Activated CD4-positive, alpha-beta T cell treated with anti-CD3 and anti-CD28 coated beads for 36 hours (primary cell): ENCODE measurements at regions of chr10 and their contacts with region 1.

Region 1: DNA sequence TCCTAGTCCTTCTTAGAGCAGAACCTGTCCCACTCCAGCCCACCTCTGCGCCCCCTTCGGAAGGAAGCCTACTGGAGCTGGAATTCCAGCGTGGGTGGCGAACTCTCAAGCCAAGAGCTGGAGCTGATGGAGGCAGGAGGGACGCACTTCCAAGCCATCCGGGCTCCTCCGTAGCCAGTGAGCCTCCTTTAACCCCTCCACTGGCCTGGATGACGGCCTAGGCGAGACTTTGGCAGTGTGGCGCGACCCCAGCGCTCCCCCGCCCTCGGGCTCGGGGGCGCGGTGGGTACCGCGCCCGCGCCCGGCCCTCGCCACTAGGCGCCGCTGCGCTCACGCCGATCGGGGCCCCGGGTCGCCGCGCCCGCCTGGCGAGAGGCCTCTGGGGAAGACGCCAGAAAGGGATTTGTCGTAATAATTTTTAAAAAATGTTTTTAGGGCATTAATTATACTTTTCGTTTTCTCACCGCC is 5.1 kb upstream of the EMX2 start:
- DNase-seq: peak; percentile 61
- ATAC-seq: peak; percentile 38
- H3K4me3 Mint-ChIP-seq: no peak overlapping the region
- H3K27ac Mint-ChIP-seq: no peak overlapping the region
- H3K4me1 Mint-ChIP-seq: peaks cover 14% of the 10 kb centered on the region
- H3K27me3 Mint-ChIP-seq: peaks cover 67% of the 10 kb centered on the region

Region 2: GRCh38 chr10:117167789-117168674 is 369.4 kb before region 1 on chr10:
- CTCF ChIA-PET with region 1: no interaction called
- POLR2A ChIA-PET with region 1: no interaction called
- intact Hi-C with region 1: loop called (anchors 2 to 10 kb)
- DNase-seq: peak; percentile 85
- ATAC-seq: peak; percentile 88
- H3K4me3 Mint-ChIP-seq: peak overlapping the region; percentile 26
- H3K27ac Mint-ChIP-seq: no peak overlapping the region
- H3K4me1 Mint-ChIP-seq: peaks cover 40% of the 10 kb centered on the region
- H3K27me3 Mint-ChIP-seq: peaks cover 72% of the 10 kb centered on the region

Region 3: GRCh38 chr10:117178190-117178589 is 359.3 kb before region 1 on chr10:
- CTCF ChIA-PET with region 1: no interaction called
- POLR2A ChIA-PET with region 1: no interaction called
- intact Hi-C with region 1: no loop called
- DNase-seq: no peak
- ATAC-seq: no peak
- H3K4me3 Mint-ChIP-seq: no peak overlapping the region
- H3K27ac Mint-ChIP-seq: no peak overlapping the region
- H3K4me1 Mint-ChIP-seq: peaks cover 18% of the 10 kb centered on the region
- H3K27me3 Mint-ChIP-seq: peaks cover 16% of the 10 kb centered on the region

Region 4: GRCh38 chr10:117503244-117504205 is 33.9 kb before region 1 on chr10:
- CTCF ChIA-PET with region 1: no interaction called
- POLR2A ChIA-PET with region 1: no interaction called
- intact Hi-C with region 1: no loop called
- DNase-seq: no peak
- ATAC-seq: no peak
- H3K4me3 Mint-ChIP-seq: no peak overlapping the region
- H3K27ac Mint-ChIP-seq: no peak overlapping the region
- H3K4me1 Mint-ChIP-seq: no peaks in the 10 kb centered on the region
- H3K27me3 Mint-ChIP-seq: peaks cover 22% of the 10 kb centered on the region

Region 5: DNA sequence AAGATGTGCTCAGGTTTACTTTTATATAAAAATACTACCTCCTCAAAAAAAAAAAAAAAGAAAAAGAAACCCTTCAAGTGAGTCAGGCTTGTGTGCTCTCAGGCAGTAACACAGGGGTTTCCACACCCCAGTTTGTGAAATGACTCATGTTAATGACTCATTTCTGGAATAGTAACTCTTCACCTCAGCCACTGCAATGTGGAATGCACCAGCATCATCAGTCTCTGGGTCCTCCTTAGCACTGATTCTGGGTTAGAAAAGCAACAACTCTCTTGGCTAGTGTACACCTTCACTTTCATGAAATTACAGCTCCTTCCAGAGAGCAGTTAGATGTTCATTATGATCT is 115.7 kb after region 1 on chr10:
- CTCF ChIA-PET with region 1: no interaction called
- POLR2A ChIA-PET with region 1: no interaction called
- intact Hi-C with region 1: loop called in 1 of 2 experiments (anchors 5 kb)
- DNase-seq: peak; percentile 61
- ATAC-seq: peak; percentile 95
- H3K4me3 Mint-ChIP-seq: no peak overlapping the region
- H3K27ac Mint-ChIP-seq: no peak overlapping the region
- H3K4me1 Mint-ChIP-seq: peaks cover 27% of the 10 kb centered on the region
- H3K27me3 Mint-ChIP-seq: peaks cover 34% of the 10 kb centered on the region

Region 6: DNA sequence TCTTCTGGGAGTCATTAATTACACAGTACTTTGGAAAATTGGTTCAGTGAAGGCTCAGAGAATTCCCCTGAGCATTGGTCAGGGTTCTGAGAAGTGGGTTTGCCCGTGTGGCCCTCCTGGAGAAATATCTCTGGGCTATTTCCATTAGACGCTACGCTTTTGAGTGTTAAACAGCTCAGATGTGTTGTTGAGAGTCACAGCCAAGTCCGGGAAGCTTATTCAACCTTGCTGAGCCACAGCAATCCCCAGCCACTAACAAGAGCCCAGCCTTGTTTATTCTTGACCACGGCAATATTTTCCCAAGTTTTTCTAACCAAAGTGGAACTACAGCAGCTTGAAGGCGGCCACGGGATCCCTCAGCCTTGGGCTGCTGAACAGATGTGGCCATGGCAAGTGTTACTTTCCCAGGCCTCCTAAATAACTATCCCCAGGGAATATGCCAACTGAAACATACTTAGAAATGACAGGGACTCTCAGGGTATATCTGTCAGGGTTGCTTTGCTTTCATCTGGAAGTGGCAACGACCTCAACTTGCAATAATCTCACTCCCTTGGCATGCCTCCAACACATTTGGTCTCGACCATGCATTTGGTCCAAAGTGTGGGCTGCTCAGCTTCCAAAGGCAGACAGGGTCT is 219.7 kb after region 1 on chr10:
- CTCF ChIA-PET with region 1: interaction called, 3 read pairs
- POLR2A ChIA-PET with region 1: no interaction called
- intact Hi-C with region 1: loop called in 1 of 2 experiments (anchors 5 kb)
- DNase-seq: no peak
- ATAC-seq: no peak
- H3K4me3 Mint-ChIP-seq: no peak overlapping the region
- H3K27ac Mint-ChIP-seq: no peak overlapping the region
- H3K4me1 Mint-ChIP-seq: no peaks in the 10 kb centered on the region
- H3K27me3 Mint-ChIP-seq: peaks cover 12% of the 10 kb centered on the region

Region 7: GRCh38 chr10:117929327-117930067 is 392.0 kb after region 1 on chr10:
- CTCF ChIA-PET with region 1: no interaction called
- POLR2A ChIA-PET with region 1: no interaction called
- intact Hi-C with region 1: no loop called
- DNase-seq: no peak
- ATAC-seq: no peak
- H3K4me3 Mint-ChIP-seq: no peak overlapping the region
- H3K27ac Mint-ChIP-seq: no peak overlapping the region
- H3K4me1 Mint-ChIP-seq: no peaks in the 10 kb centered on the region
- H3K27me3 Mint-ChIP-seq: peaks cover 9% of the 10 kb centered on the region

Region 8: GRCh38 chr10:118241229-118242137 is 704.0 kb after region 1 on chr10:
- CTCF ChIA-PET with region 1: interaction called, 5 read pairs
- POLR2A ChIA-PET with region 1: no interaction called
- intact Hi-C with region 1: loop called (anchors 1 kb)
- DNase-seq: peak; percentile 81
- ATAC-seq: no peak
- H3K4me3 Mint-ChIP-seq: no peak overlapping the region
- H3K27ac Mint-ChIP-seq: no peak overlapping the region
- H3K4me1 Mint-ChIP-seq: no peaks in the 10 kb centered on the region
- H3K27me3 Mint-ChIP-seq: peaks cover 36% of the 10 kb centered on the region